Dendritic cell treated with granulocyte-macrophage colony-stimulating factor and Interleukin-4, amounts not matched to agents 40 ng/mL and 50 ng/mL, for 4 days (primary cell): ENCODE measurements at regions of chr22 and their contacts with region 1.

Region 1: GRCh38 chr22:22130953-22131608 is 113.5 kb upstream of the VPREB1 start:
- H3K4me3 Mint-ChIP-seq: no peak overlapping the region
- H3K27ac Mint-ChIP-seq: no peak overlapping the region
- H3K4me1 Mint-ChIP-seq: no peaks in the 10 kb centered on the region
- H3K27me3 Mint-ChIP-seq: no peaks in the 10 kb centered on the region

Region 2: GRCh38 chr22:22030493-22031182 is 100.4 kb before region 1 on chr22:
- intact Hi-C with region 1: loop called (anchors 10 kb)
- H3K4me3 Mint-ChIP-seq: no peak overlapping the region
- H3K27ac Mint-ChIP-seq: no peak overlapping the region
- H3K4me1 Mint-ChIP-seq: peaks cover 12% of the 10 kb centered on the region
- H3K27me3 Mint-ChIP-seq: no peaks in the 10 kb centered on the region